ENCODE measurements at regions of chr7 and their contacts with region 1.

Region 1: GRCh38 chr7:93228302-93228701 is 2.0 kb upstream of the HEPACAM2 start:
- DNase-seq: no peak
- H3K4me3 ChIP-seq: no peak overlapping the region
- H3K27ac ChIP-seq: no peak overlapping the region
- H3K4me1 ChIP-seq: no peaks in the 10 kb centered on the region
- H3K27me3 ChIP-seq: no peaks in the 10 kb centered on the region
- CTCF ChIP-seq: peak in 2 of 3 experiments; percentile 34 to 60; a peak in 2 of 4 replicates
- EP300 ChIP-seq: no peak
- POLR2A ChIP-seq: no peak
- RAD21 ChIP-seq: peak; percentile 46 to 50; a peak in 3 of 4 replicates

Region 2: GRCh38 chr7:93092757-93093370 is 135.4 kb before region 1 on chr7:
- CTCF ChIA-PET with region 1: interaction called, 38 read pairs
- POLR2A ChIA-PET with region 1: no interaction called
- DNase-seq: no peak
- H3K4me3 ChIP-seq: no peak overlapping the region
- H3K27ac ChIP-seq: no peak overlapping the region
- H3K4me1 ChIP-seq: no peaks in the 10 kb centered on the region
- H3K27me3 ChIP-seq: no peaks in the 10 kb centered on the region
- CTCF ChIP-seq: peak in 2 of 3 experiments; percentile 58 to 61; a peak in 3 of 4 replicates
- EP300 ChIP-seq: no peak
- POLR2A ChIP-seq: no peak
- RAD21 ChIP-seq: peak; percentile 85 to 86

Region 3: DNA sequence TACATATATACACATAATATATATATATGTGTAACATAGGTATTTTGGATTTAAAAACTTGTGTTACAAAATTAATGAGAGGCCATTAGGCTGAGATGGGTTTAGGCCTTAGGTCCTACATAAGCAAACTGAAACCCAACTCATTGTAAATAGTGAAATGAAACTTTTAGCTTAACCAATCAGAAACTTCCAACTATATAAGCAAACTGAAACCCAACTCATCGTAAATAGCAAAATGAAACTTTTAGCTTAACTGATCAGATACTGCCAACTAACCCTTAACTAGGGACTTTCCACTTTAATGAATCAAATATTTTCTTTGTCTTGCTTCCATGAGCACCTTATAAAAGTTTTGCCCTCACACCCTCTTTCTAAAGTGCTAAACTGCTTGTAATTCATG is 62.9 kb before region 1 on chr7:
- CTCF ChIA-PET with region 1: no interaction called
- POLR2A ChIA-PET with region 1: no interaction called
- DNase-seq: no peak
- H3K4me3 ChIP-seq: no peak overlapping the region
- H3K27ac ChIP-seq: no peak overlapping the region
- H3K4me1 ChIP-seq: no peaks in the 10 kb centered on the region
- H3K27me3 ChIP-seq: no peaks in the 10 kb centered on the region
- CTCF ChIP-seq: no peak
- EP300 ChIP-seq: no peak
- POLR2A ChIP-seq: no peak
- RAD21 ChIP-seq: no peak

Region 4: GRCh38 chr7:93178212-93178611 is 50.1 kb before region 1 on chr7:
- CTCF ChIA-PET with region 1: interaction called, 24 read pairs
- POLR2A ChIA-PET with region 1: no interaction called
- DNase-seq: no peak
- H3K4me3 ChIP-seq: no peak overlapping the region
- H3K27ac ChIP-seq: no peak overlapping the region
- H3K4me1 ChIP-seq: no peaks in the 10 kb centered on the region; a peak in 1 of 7 replicates
- H3K27me3 ChIP-seq: no peaks in the 10 kb centered on the region
- CTCF ChIP-seq: no peak
- EP300 ChIP-seq: no peak
- POLR2A ChIP-seq: no peak
- RAD21 ChIP-seq: peak; percentile 35 to 39

Region 5: GRCh38 chr7:93185303-93186027 is 42.8 kb before region 1 on chr7:
- CTCF ChIA-PET with region 1: interaction called, 24 read pairs
- POLR2A ChIA-PET with region 1: no interaction called
- DNase-seq: no peak
- H3K4me3 ChIP-seq: no peak overlapping the region
- H3K27ac ChIP-seq: no peak overlapping the region
- H3K4me1 ChIP-seq: no peaks in the 10 kb centered on the region
- H3K27me3 ChIP-seq: no peaks in the 10 kb centered on the region
- CTCF ChIP-seq: no peak
- EP300 ChIP-seq: no peak
- POLR2A ChIP-seq: no peak
- RAD21 ChIP-seq: no peak

Region 6: DNA sequence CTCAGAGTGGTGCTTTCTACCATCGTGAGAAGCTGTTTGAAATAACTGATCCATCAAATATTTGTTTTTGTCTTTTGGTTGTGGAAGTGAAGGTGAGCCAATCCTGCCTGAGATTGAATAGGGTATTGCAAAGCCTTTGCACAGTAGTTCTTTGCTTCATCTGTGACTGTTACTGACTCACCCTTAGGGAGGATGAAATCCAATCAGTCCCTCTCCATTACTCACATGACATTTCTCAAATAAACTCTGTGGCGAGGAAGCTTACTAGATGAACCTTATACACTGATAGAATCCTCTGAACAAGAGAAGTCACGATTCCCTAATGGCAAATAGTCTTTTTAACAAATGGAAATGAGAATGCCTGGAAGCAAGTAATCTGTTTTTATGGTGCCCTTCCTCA is 33.9 kb before region 1 on chr7:
- CTCF ChIA-PET with region 1: interaction called, 10 read pairs
- POLR2A ChIA-PET with region 1: no interaction called
- DNase-seq: no peak
- H3K4me3 ChIP-seq: no peak overlapping the region
- H3K27ac ChIP-seq: no peak overlapping the region
- H3K4me1 ChIP-seq: no peaks in the 10 kb centered on the region
- H3K27me3 ChIP-seq: no peaks in the 10 kb centered on the region
- CTCF ChIP-seq: no peak
- EP300 ChIP-seq: no peak
- POLR2A ChIP-seq: no peak
- RAD21 ChIP-seq: no peak

Region 7: DNA sequence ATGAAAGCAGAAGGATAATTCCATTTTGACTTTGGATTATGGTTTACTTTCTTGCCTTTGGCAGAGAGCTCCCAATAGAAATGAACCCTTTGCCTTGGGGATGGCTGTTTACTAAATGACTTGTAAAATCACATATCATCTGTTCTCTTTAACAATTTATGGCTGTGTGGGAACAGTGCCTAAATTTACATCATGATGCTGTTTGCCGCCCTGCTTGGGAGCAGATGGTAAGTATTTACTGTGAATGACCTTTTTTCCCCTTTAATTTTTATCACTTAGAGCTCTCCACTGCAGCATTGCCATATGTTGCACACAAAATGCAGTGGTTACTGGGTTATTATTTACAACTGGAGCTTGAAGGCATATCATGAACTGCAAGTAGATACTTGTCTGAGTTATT is 15.4 kb before region 1 on chr7:
- CTCF ChIA-PET with region 1: interaction called, 14 read pairs
- POLR2A ChIA-PET with region 1: no interaction called
- DNase-seq: no peak
- H3K4me3 ChIP-seq: no peak overlapping the region
- H3K27ac ChIP-seq: no peak overlapping the region
- H3K4me1 ChIP-seq: no peaks in the 10 kb centered on the region
- H3K27me3 ChIP-seq: no peaks in the 10 kb centered on the region
- CTCF ChIP-seq: no peak
- EP300 ChIP-seq: no peak
- POLR2A ChIP-seq: no peak
- RAD21 ChIP-seq: no peak

Region 8: DNA sequence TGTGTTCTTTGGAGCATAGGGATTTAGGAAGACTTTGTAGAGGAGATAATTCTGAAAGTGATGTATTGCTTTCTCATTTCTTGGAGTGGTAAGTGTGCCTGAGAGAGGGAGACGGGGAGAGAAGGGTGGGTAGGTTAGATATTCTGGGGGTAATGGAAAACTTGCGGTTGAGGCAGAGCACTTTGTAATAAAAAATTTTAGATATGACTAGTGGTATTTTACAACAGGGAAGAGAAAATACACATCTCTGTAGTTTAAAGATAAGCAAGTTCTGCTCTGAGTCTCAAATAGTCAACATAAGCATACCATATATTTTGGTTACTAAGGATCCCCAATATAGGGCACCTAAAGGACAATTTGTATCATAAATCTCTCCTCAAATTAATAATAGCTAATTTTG is 10.4 kb after region 1 on chr7:
- CTCF ChIA-PET with region 1: interaction called, 15 read pairs
- POLR2A ChIA-PET with region 1: no interaction called
- DNase-seq: no peak
- H3K4me3 ChIP-seq: no peak overlapping the region
- H3K27ac ChIP-seq: no peak overlapping the region
- H3K4me1 ChIP-seq: peaks cover 0 to under 1% (median 0%) of the 10 kb centered on the region in 4 experiments; a peak in 1 of 7 replicates
- H3K27me3 ChIP-seq: no peaks in the 10 kb centered on the region
- CTCF ChIP-seq: no peak
- EP300 ChIP-seq: no peak
- POLR2A ChIP-seq: no peak
- RAD21 ChIP-seq: no peak